ENCODE measurements at regions of chrX and their contacts with region 1.

Region 1: GRCh38 chrX:66046612-66047235 is 6.8 kb upstream of the VSIG4 start:
- DNase-seq: peak; percentile 81
- ATAC-seq: peak; percentile 82
- H3K4me3 ChIP-seq: no peak overlapping the region
- H3K27ac ChIP-seq: peak overlapping the region; percentile 85
- H3K4me1 ChIP-seq: peaks cover 36% of the 10 kb centered on the region
- H3K27me3 ChIP-seq: no peaks in the 10 kb centered on the region
- CTCF ChIP-seq: no peak
- EP300 ChIP-seq: peak; percentile 97 to 100
- POLR2A ChIP-seq: no peak
- RAD21 ChIP-seq: no peak

Region 2: DNA sequence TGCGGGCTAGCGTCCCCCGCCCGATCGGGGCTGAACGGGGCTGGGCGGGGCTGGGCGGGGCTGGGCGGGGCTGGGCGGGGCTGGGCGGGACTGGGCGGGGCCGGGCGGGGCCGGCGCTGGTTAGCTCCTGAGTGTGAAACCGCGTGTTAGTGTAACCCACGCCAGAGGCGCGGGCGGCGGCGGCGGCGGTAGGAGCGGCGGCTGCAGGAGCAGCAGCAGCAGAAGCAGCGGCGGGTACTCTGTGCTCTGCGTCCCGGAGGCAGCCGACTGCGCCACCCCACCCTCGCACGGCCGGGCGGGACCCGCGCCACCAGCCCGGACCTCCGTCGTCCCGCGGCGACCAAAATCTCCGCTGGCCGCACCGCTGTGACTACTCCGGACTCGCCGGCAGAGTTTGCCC is 640.2 kb before region 1 on chrX:
- CTCF ChIA-PET with region 1: no interaction called
- POLR2A ChIA-PET with region 1: no interaction called
- RAD21 ChIA-PET with region 1: no interaction called
- SMC1A ChIA-PET with region 1: no interaction called
- in situ Hi-C with region 1: no loop called
- intact Hi-C with region 1: no loop called
- DNase-seq: no peak
- ATAC-seq: no peak
- H3K4me3 ChIP-seq: no peak overlapping the region
- H3K27ac ChIP-seq: no peak overlapping the region
- H3K4me1 ChIP-seq: no peaks in the 10 kb centered on the region
- H3K27me3 ChIP-seq: no peaks in the 10 kb centered on the region
- CTCF ChIP-seq: no peak
- EP300 ChIP-seq: no peak
- POLR2A ChIP-seq: no peak
- RAD21 ChIP-seq: no peak

Region 3: GRCh38 chrX:65886813-65887212 is 159.9 kb before region 1 on chrX:
- CTCF ChIA-PET with region 1: no interaction called
- POLR2A ChIA-PET with region 1: no interaction called
- RAD21 ChIA-PET with region 1: no interaction called
- SMC1A ChIA-PET with region 1: no interaction called
- in situ Hi-C with region 1: no loop called
- intact Hi-C with region 1: no loop called
- DNase-seq: no peak
- ATAC-seq: no peak
- H3K4me3 ChIP-seq: no peak overlapping the region
- H3K27ac ChIP-seq: no peak overlapping the region
- H3K4me1 ChIP-seq: no peaks in the 10 kb centered on the region
- H3K27me3 ChIP-seq: no peaks in the 10 kb centered on the region
- CTCF ChIP-seq: no peak
- EP300 ChIP-seq: no peak
- POLR2A ChIP-seq: no peak
- RAD21 ChIP-seq: no peak

Region 4: GRCh38 chrX:66022632-66023384 is 23.9 kb before region 1 on chrX:
- CTCF ChIA-PET with region 1: interaction called, 16 read pairs
- POLR2A ChIA-PET with region 1: interaction called, 18 read pairs
- RAD21 ChIA-PET with region 1: interaction called, 47 read pairs
- SMC1A ChIA-PET with region 1: interaction called, 85 read pairs
- in situ Hi-C with region 1: no loop called
- intact Hi-C with region 1: no loop called
- DNase-seq: no peak
- ATAC-seq: peak; percentile 46; the same call in 2 of the 3 replicates
- H3K4me3 ChIP-seq: no peak overlapping the region
- H3K27ac ChIP-seq: no peak overlapping the region
- H3K4me1 ChIP-seq: peaks cover 24% of the 10 kb centered on the region
- H3K27me3 ChIP-seq: no peaks in the 10 kb centered on the region
- CTCF ChIP-seq: 0 out of 6 replicates have a peak, but pooled peaks of 2 of the 3 experiments have one; percentile 25 to 41
- EP300 ChIP-seq: no peak
- POLR2A ChIP-seq: no peak
- RAD21 ChIP-seq: peak; percentile 62

Region 5: DNA sequence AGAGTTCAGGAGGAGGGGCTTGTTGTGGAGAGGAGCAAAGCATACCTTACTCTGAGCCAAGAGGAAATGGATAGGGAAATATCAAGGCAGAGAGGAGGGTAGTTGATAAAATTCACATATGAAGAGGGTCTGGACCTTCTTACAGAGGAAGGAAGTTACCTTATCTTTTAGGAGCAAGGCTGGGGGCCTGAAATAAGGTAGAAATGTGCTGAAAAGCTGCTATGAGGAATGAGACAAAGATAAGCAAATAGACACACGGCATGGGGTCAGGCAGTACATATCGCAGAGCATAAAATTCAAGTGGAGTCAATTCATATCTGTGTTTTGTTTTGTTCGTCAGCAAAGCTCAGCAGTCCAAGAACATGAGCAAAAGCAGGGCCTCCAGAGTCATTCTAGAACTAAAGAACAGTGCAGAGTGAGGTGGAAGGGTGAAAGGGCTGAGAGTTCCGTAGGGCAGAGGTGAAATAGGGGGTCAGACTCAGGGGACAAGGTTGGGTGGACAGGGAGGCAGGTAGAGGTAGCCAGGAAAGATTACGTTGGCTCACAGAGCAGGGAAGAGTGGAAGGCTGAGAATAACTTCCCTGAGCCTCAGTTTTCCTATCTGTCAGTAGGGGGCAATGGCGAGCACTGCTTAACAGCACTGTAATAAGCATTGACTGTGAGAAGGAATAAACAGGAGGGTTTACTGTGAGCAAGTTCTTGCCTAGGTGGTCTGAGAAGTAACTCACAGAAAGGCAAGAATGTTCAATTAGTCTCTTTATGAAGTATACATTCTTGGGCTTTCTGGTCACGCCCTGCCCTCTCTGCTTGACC is 16.0 kb before region 1 on chrX:
- CTCF ChIA-PET with region 1: interaction called, 35 read pairs
- POLR2A ChIA-PET with region 1: no interaction called
- RAD21 ChIA-PET with region 1: interaction called, 12 read pairs
- SMC1A ChIA-PET with region 1: interaction called, 8 read pairs
- in situ Hi-C with region 1: no loop called
- intact Hi-C with region 1: no loop called
- DNase-seq: no peak
- ATAC-seq: peak; percentile 97
- H3K4me3 ChIP-seq: no peak overlapping the region
- H3K27ac ChIP-seq: no peak overlapping the region
- H3K4me1 ChIP-seq: no peaks in the 10 kb centered on the region
- H3K27me3 ChIP-seq: no peaks in the 10 kb centered on the region
- CTCF ChIP-seq: peak; percentile 58 to 85 (median 78)
- EP300 ChIP-seq: no peak
- POLR2A ChIP-seq: no peak
- RAD21 ChIP-seq: peak; percentile 74

Region 6: DNA sequence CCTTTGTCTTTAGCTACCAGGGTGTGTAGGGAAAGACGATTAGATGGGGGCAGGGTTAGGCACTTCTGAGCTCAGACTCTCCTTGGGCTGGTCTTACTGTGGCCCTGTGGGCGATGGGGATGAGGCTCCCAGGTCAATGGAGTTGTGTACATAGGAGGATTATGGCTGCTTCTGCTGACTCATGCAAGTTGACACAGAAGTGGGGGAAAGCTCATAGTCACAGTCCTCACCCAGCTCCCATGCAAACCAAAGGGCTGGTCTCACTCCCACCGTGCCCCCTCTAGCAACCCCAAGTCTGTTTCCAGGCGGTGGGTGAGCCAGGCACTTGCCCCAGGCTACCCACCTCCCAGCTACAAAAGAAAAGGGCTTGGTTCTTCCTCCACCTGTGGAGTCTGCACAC is 17.5 kb after region 1 on chrX:
- CTCF ChIA-PET with region 1: interaction called, 3 read pairs
- POLR2A ChIA-PET with region 1: no interaction called
- RAD21 ChIA-PET with region 1: interaction called, 3 read pairs
- SMC1A ChIA-PET with region 1: interaction called, 10 read pairs
- in situ Hi-C with region 1: no loop called
- intact Hi-C with region 1: no loop called
- DNase-seq: no peak
- ATAC-seq: no peak
- H3K4me3 ChIP-seq: no peak overlapping the region
- H3K27ac ChIP-seq: no peak overlapping the region
- H3K4me1 ChIP-seq: no peaks in the 10 kb centered on the region
- H3K27me3 ChIP-seq: no peaks in the 10 kb centered on the region
- CTCF ChIP-seq: no peak
- EP300 ChIP-seq: no peak
- POLR2A ChIP-seq: no peak
- RAD21 ChIP-seq: no peak

Region 7: GRCh38 chrX:66110112-66110511 is 63.4 kb after region 1 on chrX:
- CTCF ChIA-PET with region 1: interaction called, 9 read pairs
- POLR2A ChIA-PET with region 1: no interaction called
- RAD21 ChIA-PET with region 1: interaction called, 9 read pairs
- SMC1A ChIA-PET with region 1: interaction called, 18 read pairs
- in situ Hi-C with region 1: loop called (anchors 10 kb)
- intact Hi-C with region 1: no loop called
- DNase-seq: no peak
- ATAC-seq: peak; percentile 32
- H3K4me3 ChIP-seq: no peak overlapping the region
- H3K27ac ChIP-seq: no peak overlapping the region
- H3K4me1 ChIP-seq: no peaks in the 10 kb centered on the region
- H3K27me3 ChIP-seq: no peaks in the 10 kb centered on the region
- CTCF ChIP-seq: peak; percentile 33 to 52 (median 34)
- EP300 ChIP-seq: no peak
- POLR2A ChIP-seq: no peak
- RAD21 ChIP-seq: peak; percentile 66

Region 8: DNA sequence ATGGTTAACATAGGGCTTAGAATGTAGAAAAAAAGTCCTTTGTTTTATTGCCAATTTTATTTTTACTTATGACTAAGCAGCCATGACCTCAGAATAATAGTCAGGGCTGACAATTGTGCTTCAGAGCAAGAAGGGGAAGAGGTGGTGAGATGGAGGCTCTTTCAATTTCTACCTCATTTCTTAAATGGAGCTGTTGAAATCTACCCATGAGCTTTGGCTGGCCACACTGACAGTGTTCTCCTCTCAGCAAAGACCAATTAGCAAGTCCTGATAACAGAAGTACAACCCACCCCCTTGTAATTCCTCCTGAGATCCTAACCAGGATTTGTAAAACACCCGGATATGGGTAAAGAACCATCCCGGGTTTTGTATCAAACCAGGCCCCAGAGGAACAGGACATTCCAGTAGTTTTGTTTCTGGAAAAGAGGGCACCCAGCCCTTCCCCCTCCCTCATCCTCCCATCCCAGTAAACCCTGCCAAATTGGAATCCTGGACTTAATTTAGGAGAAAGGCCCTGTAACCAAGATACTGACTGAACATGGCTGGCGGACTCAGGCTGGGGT is 117.2 kb after region 1 on chrX and contains the start of gene HEPH:
- CTCF ChIA-PET with region 1: interaction called, 6 read pairs
- POLR2A ChIA-PET with region 1: interaction called, 6 read pairs
- RAD21 ChIA-PET with region 1: interaction called, 12 read pairs
- SMC1A ChIA-PET with region 1: interaction called, 5 read pairs
- in situ Hi-C with region 1: no loop called
- intact Hi-C with region 1: loop called (anchors 1 kb)
- DNase-seq: peak; percentile 12
- ATAC-seq: peak; percentile 86
- H3K4me3 ChIP-seq: no peak within 1 kb of the TSS
- H3K27ac ChIP-seq: no peak within 1 kb of the TSS
- H3K4me1 ChIP-seq: no peaks in the 10 kb centered on the region; the same call in 1 of the 2 replicates
- H3K27me3 ChIP-seq: no peaks in the 10 kb centered on the region
- CTCF ChIP-seq: no peak
- EP300 ChIP-seq: 0 out of 4 replicates have a peak, but pooled peaks of 1 of the 2 experiments have one; percentile 7
- POLR2A ChIP-seq: no peak
- RAD21 ChIP-seq: no peak
- polyA plus RNA-seq, gene HEPH: 0.20 to 0.56 TPM